PC-3 (cell line): ENCODE measurements at regions of chr19 and their contacts with region 1.

Region 1: DNA sequence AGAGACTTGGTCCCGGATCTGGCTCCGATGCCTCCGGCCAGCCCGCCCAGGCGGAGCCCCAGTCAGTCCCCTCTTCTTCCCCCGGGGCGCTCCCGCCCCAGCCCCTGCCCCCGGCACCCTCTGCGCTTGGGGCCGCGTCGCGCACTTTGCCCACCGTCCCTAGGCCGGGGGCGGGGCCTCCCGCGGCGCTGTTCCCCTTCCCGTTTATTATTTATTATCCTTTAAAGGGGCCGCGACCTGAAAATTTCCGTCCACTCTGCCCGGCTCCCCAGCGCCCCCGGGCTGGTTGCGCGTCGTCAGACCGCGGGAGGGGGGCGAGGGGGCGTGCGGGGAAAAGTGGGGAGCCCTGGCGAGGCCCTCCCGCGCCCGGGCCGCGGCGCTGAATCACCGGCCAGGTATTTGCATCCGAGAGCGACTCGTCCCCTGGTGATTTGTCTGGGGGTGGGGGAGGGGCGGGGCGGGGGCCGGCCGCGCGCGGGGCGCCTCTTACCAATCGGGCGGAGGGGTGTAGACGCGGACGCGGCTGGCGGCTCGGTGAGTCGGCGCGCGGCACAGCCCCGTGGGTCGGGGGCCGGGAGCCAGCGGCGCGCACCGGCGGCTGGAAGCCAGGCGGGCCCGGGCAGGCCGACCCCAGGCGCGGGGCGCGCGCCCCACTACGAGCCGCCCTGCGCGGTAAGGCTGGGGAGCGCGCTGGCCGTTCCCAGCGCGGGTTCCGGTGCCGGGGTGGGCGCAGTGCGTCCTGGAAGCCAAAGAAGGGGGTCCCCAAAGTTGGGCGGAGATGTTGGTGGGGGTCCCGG is at the start of gene ARID3A:
- DNase-seq: peak; percentile 65
- ATAC-seq: peak; percentile 59
- H3K4me3 ChIP-seq: peak within 1 kb of the TSS; percentile 81
- H3K27ac ChIP-seq: peak within 1 kb of the TSS; percentile 39; the same call in 1 of the 2 replicates
- H3K4me1 ChIP-seq: no peaks in the 10 kb centered on the region; the same call in 1 of the 2 replicates
- H3K27me3 ChIP-seq: no peaks in the 10 kb centered on the region
- CTCF ChIP-seq: no peak
- total RNA-seq, gene ARID3A: 5.6 and 13.9 TPM in 2 replicates

Region 2: GRCh38 chr19:860481-861101 is 65.1 kb before region 1 on chr19:
- CTCF ChIA-PET with region 1: no interaction called
- POLR2A ChIA-PET with region 1: no interaction called
- intact Hi-C with region 1: loop called (anchors 1 kb)
- DNase-seq: peak; percentile 77
- ATAC-seq: peak; percentile 78
- H3K4me3 ChIP-seq: peak overlapping the region; percentile 69
- H3K27ac ChIP-seq: no peak overlapping the region
- H3K4me1 ChIP-seq: no peaks in the 10 kb centered on the region
- H3K27me3 ChIP-seq: no peaks in the 10 kb centered on the region
- CTCF ChIP-seq: no peak

Region 3: GRCh38 chr19:982567-983170 is 56.9 kb after region 1 on chr19:
- CTCF ChIA-PET with region 1: interaction called, 3 read pairs
- POLR2A ChIA-PET with region 1: no interaction called
- intact Hi-C with region 1: loop called (anchors 1 kb)
- DNase-seq: peak; percentile 68
- ATAC-seq: peak; percentile 89
- H3K4me3 ChIP-seq: peak overlapping the region; percentile 67
- H3K27ac ChIP-seq: no peak overlapping the region
- H3K4me1 ChIP-seq: peaks cover 8% of the 10 kb centered on the region
- H3K27me3 ChIP-seq: no peaks in the 10 kb centered on the region
- CTCF ChIP-seq: peak; percentile 78